HepG2 (cell line): ENCODE measurements at regions of chr20 and their contacts with region 1.

Region 1: GRCh38 chr20:33097001-33097400 is 17.6 kb downstream of the BPIFB4 start:
- DNase-seq: no peak
- ATAC-seq: no peak
- H3K4me3 ChIP-seq: no peak overlapping the region
- H3K27ac ChIP-seq: no peak overlapping the region
- H3K4me1 ChIP-seq: no peaks in the 10 kb centered on the region
- H3K27me3 ChIP-seq: no peaks in the 10 kb centered on the region; a peak in 1 of 5 replicates
- CTCF ChIP-seq: no peak
- EP300 ChIP-seq: no peak
- POLR2A ChIP-seq: no peak
- RAD21 ChIP-seq: no peak

Region 2: DNA sequence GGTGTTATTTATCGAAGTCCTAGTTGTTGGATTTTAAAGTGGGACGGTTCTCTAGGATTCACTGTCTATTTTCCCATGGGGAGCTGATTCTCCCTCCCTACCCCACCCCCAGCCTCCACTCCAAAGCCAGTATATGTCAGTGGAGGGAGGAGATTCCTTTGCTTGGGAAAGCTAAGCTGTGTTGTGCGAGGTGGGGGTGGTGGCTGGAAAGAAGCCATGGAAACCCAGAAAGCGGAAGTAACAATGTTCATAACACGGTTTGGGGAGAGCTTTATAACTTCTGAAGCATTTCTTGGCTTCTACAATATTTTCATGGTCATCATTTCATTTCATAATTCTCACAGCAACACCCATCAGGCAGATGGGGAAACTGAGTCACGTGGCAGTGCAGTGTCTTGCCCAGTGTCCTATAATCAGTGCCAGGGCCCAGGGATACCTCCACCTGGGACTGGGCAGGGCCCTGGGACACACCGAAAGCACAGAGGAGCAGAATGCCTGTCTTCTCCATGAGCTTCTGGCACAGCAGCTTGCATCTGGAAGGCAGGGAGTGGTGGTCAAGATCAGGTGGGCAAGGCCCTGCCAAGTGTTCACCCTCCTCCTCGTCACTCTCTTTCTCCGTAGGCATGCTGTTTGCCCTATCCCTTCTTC is 97.3 kb before region 1 on chr20:
- CTCF ChIA-PET with region 1: interaction called, 25 read pairs
- POLR2A ChIA-PET with region 1: no interaction called
- in situ Hi-C with region 1: no loop called
- intact Hi-C with region 1: loop called (anchors 1 kb)
- DNase-seq: peak; percentile 58
- ATAC-seq: peak; percentile 16; the same call in 2 of the 3 replicates
- H3K4me3 ChIP-seq: peak overlapping the region in 1 of 3 experiments; percentile 41; a peak in 1 of 6 replicates
- H3K27ac ChIP-seq: no peak overlapping the region
- H3K4me1 ChIP-seq: peaks cover 46% of the 10 kb centered on the region
- H3K27me3 ChIP-seq: peaks cover 0 to 18% of the 10 kb centered on the region in 2 experiments; a peak in 1 of 5 replicates
- CTCF ChIP-seq: no peak
- EP300 ChIP-seq: peak in 1 of 2 experiments; percentile 30; a peak in 1 of 4 replicates
- POLR2A ChIP-seq: no peak
- RAD21 ChIP-seq: no peak

Region 3: GRCh38 chr20:33211817-33212424 is 114.9 kb after region 1 on chr20:
- CTCF ChIA-PET with region 1: interaction called, 21 read pairs
- POLR2A ChIA-PET with region 1: no interaction called
- in situ Hi-C with region 1: no loop called
- intact Hi-C with region 1: loop called (anchors 1 kb)
- DNase-seq: peak; percentile 78
- ATAC-seq: peak; percentile 94
- H3K4me3 ChIP-seq: no peak overlapping the region
- H3K27ac ChIP-seq: no peak overlapping the region
- H3K4me1 ChIP-seq: no peaks in the 10 kb centered on the region
- H3K27me3 ChIP-seq: peaks cover 2 to 4% of the 10 kb centered on the region in 2 experiments; a peak in 1 of 5 replicates
- CTCF ChIP-seq: peak; percentile 83
- EP300 ChIP-seq: no peak
- POLR2A ChIP-seq: no peak
- RAD21 ChIP-seq: peak; percentile 52

Region 4: GRCh38 chr20:33299111-33299603 is 202.2 kb after region 1 on chr20:
- CTCF ChIA-PET with region 1: interaction called, 15 read pairs
- POLR2A ChIA-PET with region 1: no interaction called
- in situ Hi-C with region 1: no loop called
- intact Hi-C with region 1: no loop called
- DNase-seq: peak; percentile 63
- ATAC-seq: peak; percentile 91
- H3K4me3 ChIP-seq: no peak overlapping the region; a peak in 1 of 6 replicates
- H3K27ac ChIP-seq: no peak overlapping the region
- H3K4me1 ChIP-seq: 0 out of 2 replicates have a peak, but pooled peaks cover 7% of the 10 kb centered on the region
- H3K27me3 ChIP-seq: peaks cover 10 to 75% of the 10 kb centered on the region in 2 experiments; a peak in 4 of 5 replicates
- CTCF ChIP-seq: peak; percentile 99
- EP300 ChIP-seq: no peak
- POLR2A ChIP-seq: no peak
- RAD21 ChIP-seq: peak; percentile 94